GM23248 (cell line): ENCODE measurements at regions of chr1 and their contacts with region 1.

Region 1: GRCh38 chr1:205354259-205354904 is 2.3 kb downstream of the KLHDC8A start:
- DNase-seq: peak; percentile 78
- H3K4me3 ChIP-seq: no peak overlapping the region
- H3K27ac ChIP-seq: no peak overlapping the region
- H3K4me1 ChIP-seq: peaks cover 4% of the 10 kb centered on the region; the same call in 1 of the 2 replicates
- H3K27me3 ChIP-seq: peaks cover 24% of the 10 kb centered on the region

Region 2: DNA sequence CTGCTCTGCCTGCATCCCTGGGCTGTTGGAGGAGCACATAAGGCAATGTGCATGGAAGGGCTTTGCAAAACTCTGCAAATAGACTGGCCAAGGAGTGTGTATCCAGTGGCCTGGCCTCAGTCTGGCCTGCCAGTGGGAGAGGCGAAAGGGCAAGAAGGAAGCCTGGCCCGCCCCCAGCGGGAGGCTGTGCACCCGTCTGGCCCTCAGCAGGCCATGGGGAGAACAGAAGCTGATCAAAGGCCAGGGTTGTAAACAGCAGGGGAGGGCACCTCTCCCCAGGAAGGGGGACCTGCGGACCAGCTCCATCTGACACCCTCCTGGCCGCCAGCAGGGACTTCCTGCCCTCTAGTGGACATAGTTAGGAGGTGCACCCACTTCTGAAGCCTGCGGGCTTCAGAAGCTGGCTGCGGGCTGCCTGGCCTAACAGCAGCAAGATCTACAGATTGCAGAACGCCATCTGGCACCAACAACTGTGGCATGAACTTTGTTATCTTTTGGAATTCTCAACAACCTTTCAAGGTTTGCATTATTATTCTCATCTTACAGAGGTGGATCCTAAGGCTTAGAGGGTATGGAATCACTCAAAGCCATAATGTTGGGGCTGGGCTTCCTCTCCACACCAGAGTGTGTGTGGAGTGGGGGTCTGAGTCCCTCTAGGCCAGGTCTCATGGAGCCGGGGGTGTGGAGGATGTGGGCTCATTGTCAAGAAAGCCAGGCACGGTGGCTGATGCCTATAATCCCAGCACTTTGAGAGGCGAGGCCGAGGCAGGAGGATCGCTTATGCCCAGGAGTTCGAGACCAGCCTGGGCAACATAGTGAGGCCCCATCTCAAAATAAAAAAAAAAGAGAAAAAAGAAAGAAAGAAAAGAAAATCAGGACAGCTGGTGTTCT is 131.2 kb after region 1 on chr1:
- in situ Hi-C with region 1: loop called (anchors 10 kb)
- DNase-seq: peak; percentile 78
- H3K4me3 ChIP-seq: no peak overlapping the region
- H3K27ac ChIP-seq: no peak overlapping the region
- H3K4me1 ChIP-seq: no peaks in the 10 kb centered on the region
- H3K27me3 ChIP-seq: peaks cover 39% of the 10 kb centered on the region

Region 3: GRCh38 chr1:205616563-205617293 is 262.3 kb after region 1 on chr1:
- in situ Hi-C with region 1: no loop called
- DNase-seq: no peak
- H3K4me3 ChIP-seq: no peak overlapping the region
- H3K27ac ChIP-seq: no peak overlapping the region
- H3K4me1 ChIP-seq: peaks cover 8% of the 10 kb centered on the region
- H3K27me3 ChIP-seq: no peaks in the 10 kb centered on the region

Region 4: DNA sequence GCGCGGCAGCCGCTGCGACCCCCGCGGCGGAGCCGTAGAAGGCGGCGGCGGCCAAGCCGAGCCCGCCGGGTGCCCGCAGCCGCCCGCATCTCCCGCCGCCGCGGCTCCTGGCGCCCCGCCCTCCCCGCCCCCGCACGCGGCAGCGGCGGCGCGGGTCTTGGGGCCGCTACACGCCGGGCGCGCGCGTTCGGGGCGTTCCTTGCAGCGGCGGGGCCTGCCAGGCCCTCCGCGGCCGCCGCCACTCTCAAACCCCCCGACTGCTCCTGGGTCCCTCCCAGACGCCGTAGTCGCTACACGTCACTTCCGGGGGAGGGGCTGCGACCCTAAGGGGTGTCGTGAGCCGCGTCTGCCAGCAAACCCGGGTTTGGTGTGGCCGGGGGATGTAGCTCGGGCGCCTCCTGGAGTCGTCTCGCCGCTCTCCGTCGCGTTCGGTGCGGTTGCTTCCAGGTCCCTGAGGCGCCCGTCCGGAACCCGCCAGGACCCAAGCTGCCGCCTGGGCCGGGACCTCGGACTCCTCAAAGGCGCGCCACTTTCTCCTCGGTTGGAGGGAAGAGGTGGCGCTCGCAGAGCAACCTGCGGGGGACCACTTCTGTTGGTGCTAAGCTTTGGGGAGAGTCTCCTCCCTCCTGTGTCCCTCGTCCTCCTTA is 277.5 kb after region 1 on chr1 and contains the start of gene ELK4:
- in situ Hi-C with region 1: no loop called
- DNase-seq: peak; percentile 98
- H3K4me3 ChIP-seq: peak within 1 kb of the TSS; percentile 96
- H3K27ac ChIP-seq: peak within 1 kb of the TSS; percentile 94
- H3K4me1 ChIP-seq: peaks cover 33% of the 10 kb centered on the region
- H3K27me3 ChIP-seq: no peaks in the 10 kb centered on the region
- total RNA-seq, gene ELK4: 15.2 and 16.4 TPM in 2 replicates

Region 5: DNA sequence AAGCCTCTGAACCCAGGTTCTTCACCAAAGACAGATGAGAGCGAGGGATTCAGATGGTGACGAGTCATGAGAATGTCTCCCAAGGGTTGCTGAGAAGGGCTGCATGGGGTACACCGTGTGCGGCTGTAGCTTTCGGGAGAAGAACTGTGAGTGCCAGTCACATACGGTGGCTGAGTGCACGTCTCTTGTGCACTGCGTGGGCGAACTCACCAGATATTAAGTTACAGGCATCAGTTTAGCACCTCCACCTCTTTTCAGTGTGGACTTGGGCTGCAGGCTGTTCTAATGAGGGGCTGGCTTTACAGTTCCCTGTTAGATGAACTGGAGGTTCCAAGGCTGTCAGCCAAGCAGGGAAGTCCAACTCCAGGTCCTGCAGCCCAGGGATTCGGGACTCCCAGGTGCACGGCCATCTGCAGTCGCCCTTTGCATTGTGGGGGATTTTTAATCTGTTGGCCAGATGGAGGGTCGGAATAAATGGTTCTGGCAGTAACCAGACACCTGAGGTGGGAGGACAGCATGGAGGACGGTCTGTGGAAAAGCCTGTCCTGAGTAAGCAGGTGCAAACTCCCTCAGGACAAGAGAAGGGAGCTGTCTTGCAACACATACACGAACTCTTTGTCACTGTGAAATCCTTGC is 789.3 kb after region 1 on chr1:
- in situ Hi-C with region 1: no loop called
- DNase-seq: no peak
- H3K4me3 ChIP-seq: no peak overlapping the region
- H3K27ac ChIP-seq: no peak overlapping the region
- H3K4me1 ChIP-seq: no peaks in the 10 kb centered on the region
- H3K27me3 ChIP-seq: peaks cover 80% of the 10 kb centered on the region